AG04450 (cell line): ENCODE measurements at regions of chr3 and their contacts with region 1.

Region 1: DNA sequence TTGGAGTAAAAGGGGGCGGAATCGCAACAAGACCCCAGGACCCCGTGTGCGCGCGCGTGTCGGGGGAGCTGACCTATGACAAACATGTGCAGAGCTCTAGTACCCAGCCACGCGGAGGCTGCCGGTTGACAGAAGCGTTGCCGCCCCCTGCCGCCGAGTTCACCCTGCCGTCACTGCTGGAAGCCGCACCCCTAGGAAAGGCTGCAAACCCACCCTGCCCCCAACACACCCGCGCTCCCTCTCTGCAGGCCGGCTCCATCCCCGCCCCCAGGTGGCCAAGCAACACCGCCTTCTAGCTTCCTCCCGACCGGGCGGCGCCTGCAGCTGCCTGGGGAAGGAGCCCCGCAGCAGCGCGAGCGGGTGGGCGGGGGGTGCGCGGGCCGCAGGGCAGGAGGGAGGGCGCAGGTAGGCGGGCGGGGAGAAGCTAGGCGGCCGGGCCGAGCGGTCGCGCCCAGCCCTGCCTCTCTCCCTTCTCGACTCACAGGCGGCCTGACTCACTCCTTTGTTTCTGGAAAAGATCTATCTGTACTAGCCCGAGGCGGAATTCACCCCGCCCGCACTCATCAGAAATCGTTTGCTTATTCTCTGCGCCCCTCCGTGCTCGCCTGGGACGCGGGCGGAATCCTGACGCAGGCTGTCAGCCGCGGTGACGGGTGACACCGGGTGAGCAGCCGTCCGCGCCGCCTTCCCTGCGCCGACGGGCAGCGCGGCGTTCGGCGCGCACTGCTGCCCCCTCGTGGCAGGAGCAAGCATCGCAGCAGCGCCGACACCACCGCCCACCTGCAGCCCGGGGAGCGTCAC is 160.8 kb downstream of the GAP43 start:
- DNase-seq: peak; percentile 88
- H3K4me3 ChIP-seq: peak overlapping the region; percentile 65
- H3K27ac ChIP-seq: peak overlapping the region; percentile 97
- H3K27me3 ChIP-seq: no peaks in the 10 kb centered on the region
- CTCF ChIP-seq: peak; percentile 91

Region 2: GRCh38 chr3:115658337-115659181 is 125.6 kb before region 1 on chr3:
- CTCF ChIA-PET with region 1: interaction called, 12 read pairs
- POLR2A ChIA-PET with region 1: interaction called, 8 read pairs
- DNase-seq: peak; percentile 63
- H3K4me3 ChIP-seq: peak overlapping the region; percentile 59
- H3K27ac ChIP-seq: peak overlapping the region; percentile 98
- H3K27me3 ChIP-seq: no peaks in the 10 kb centered on the region
- CTCF ChIP-seq: no peak

Region 3: DNA sequence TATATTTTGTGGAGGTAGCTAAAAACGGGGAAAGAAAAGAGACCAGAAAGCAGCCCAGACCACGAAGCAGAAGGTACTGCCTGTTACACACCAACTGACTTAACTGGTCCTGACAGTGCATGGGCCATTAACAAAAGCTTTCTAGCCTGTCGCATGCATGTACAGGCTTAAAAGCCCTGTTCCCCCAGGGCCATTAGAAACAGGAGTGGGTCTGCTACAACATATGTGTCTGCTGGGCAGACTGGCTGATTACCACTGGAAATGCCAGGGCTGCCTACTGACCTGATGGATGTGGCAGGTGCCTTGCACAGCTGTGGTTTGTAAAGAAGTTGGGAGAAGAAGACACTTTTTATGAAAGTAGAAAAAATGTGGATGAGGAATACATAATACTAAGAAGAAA is 23.4 kb before region 1 on chr3:
- CTCF ChIA-PET with region 1: interaction called, 13 read pairs
- POLR2A ChIA-PET with region 1: no interaction called
- DNase-seq: no peak
- H3K4me3 ChIP-seq: no peak overlapping the region
- H3K27ac ChIP-seq: no peak overlapping the region
- H3K27me3 ChIP-seq: no peaks in the 10 kb centered on the region
- CTCF ChIP-seq: no peak

Region 4: GRCh38 chr3:115804722-115805121 is 20.6 kb after region 1 on chr3:
- CTCF ChIA-PET with region 1: interaction called, 34 read pairs
- POLR2A ChIA-PET with region 1: interaction called, 21 read pairs
- DNase-seq: no peak
- H3K4me3 ChIP-seq: peak overlapping the region; percentile 10; the same call in 1 of the 2 replicates
- H3K27ac ChIP-seq: peak overlapping the region; percentile 95
- H3K27me3 ChIP-seq: no peaks in the 10 kb centered on the region
- CTCF ChIP-seq: no peak

Region 5: GRCh38 chr3:115819785-115820384 is 35.7 kb after region 1 on chr3:
- CTCF ChIA-PET with region 1: interaction called, 20 read pairs
- POLR2A ChIA-PET with region 1: no interaction called
- DNase-seq: peak; percentile 74
- H3K4me3 ChIP-seq: no peak overlapping the region
- H3K27ac ChIP-seq: no peak overlapping the region
- H3K27me3 ChIP-seq: no peaks in the 10 kb centered on the region
- CTCF ChIP-seq: peak; percentile 96

Region 6: GRCh38 chr3:115930922-115931321 is 146.8 kb after region 1 on chr3:
- CTCF ChIA-PET with region 1: no interaction called
- POLR2A ChIA-PET with region 1: no interaction called
- DNase-seq: no peak
- H3K4me3 ChIP-seq: no peak overlapping the region
- H3K27ac ChIP-seq: no peak overlapping the region
- H3K27me3 ChIP-seq: no peaks in the 10 kb centered on the region
- CTCF ChIP-seq: no peak

Region 7: GRCh38 chr3:115986555-115987207 is 202.5 kb after region 1 on chr3:
- CTCF ChIA-PET with region 1: no interaction called
- POLR2A ChIA-PET with region 1: no interaction called
- DNase-seq: no peak
- H3K4me3 ChIP-seq: no peak overlapping the region
- H3K27ac ChIP-seq: no peak overlapping the region
- H3K27me3 ChIP-seq: no peaks in the 10 kb centered on the region
- CTCF ChIP-seq: peak; percentile 40